ENCODE measurements at regions of chr6 and their contacts with region 1.

Region 1: DNA sequence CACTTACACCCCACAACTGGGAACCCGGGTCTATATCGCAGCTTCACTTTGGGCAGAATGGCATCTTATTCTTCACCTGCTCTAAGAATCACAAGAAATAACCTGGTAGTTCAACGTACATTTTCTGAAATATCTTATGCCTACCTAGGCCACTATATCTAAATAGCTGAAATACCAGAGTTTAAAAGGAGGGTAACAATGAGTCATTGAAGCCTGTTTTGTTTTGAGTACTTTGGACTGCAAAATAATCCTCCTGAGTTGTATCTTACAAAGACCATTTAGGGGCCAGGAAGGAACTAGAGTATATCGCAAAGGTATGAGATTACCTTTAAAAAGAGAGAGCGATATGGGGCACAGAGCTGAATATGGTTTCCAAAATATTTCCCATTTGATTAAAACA is 96.7 kb upstream of the NUP153 start:
- DNase-seq: no peak
- H3K4me3 ChIP-seq: no peak overlapping the region
- H3K27ac ChIP-seq: no peak overlapping the region
- H3K27me3 ChIP-seq: no peaks in the 10 kb centered on the region
- CTCF ChIP-seq: no peak

Region 2: GRCh38 chr6:17589406-17590096 is 213.9 kb before region 1 on chr6:
- intact Hi-C with region 1: loop called (anchors 5 to 10 kb)
- DNase-seq: peak in 3 of 10 donors; percentile 31 to 49 (median 45)
- H3K4me3 ChIP-seq: no peak overlapping the region
- H3K27ac ChIP-seq: peak overlapping the region in 1 of 59 donors; percentile 12
- H3K27me3 ChIP-seq: no peaks in the 10 kb centered on the region
- CTCF ChIP-seq: peak in 3 of 56 donors; percentile 12 to 17 (median 16)